ENCODE measurements at regions of chr15 and their contacts with region 1.

Region 1: DNA sequence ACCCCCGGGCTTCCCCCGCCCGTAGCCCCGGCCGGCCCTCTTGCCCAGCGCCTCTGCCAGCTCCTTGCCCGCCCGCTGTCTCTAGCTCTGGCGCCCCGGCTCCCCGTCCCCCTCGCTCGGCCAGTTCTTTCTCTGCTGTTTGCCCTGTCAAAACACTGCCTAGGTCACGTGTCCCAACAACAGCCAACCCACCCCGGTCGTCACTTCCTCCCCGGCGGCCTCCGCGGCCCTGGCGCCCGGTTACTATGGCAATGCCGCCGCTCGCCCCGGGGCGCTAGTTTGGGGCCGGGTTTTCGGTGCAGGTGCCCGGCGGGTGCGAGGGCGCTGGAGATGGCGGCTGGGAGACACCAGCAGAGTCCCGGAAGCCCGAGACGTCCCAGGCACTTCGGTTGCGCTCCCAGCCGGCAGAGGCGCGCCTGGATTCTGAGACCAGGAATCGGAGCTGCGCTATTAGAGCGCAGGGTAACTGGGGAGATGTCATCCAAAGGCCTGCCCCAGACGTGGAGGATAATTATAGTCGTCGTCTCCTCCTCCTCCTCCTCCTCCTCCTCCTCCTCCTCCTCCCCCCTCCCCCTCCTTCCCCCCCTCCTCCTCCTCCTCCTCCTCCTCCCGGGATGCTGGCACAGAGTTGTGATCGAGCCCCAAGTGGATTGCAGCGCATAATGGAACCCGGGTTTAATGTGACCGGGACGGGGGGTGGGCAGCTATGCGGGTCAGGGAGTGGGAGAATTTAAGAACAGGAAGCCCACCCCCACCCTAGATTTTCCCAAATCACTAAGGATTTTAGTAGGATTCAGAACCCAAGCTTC is at the start of gene ATOSA:
- H3K4me3 ChIP-seq: peak within 1 kb of the TSS; percentile 63
- H3K27ac ChIP-seq: peak within 1 kb of the TSS; percentile 92
- H3K4me1 ChIP-seq: 0 out of 2 replicates have a peak, but pooled peaks cover 3% of the 10 kb centered on the region
- CTCF ChIP-seq: peak; percentile 10; the same call in 1 of the 2 replicates

Region 2: GRCh38 chr15:52719684-52720083 is 40.2 kb after region 1 on chr15:
- CTCF ChIA-PET with region 1: no interaction called
- POLR2A ChIA-PET with region 1: interaction called, 11 read pairs
- H3K4me3 ChIP-seq: no peak overlapping the region
- H3K27ac ChIP-seq: no peak overlapping the region
- H3K4me1 ChIP-seq: no peaks in the 10 kb centered on the region
- CTCF ChIP-seq: no peak

Region 3: GRCh38 chr15:52749258-52749657 is 69.8 kb after region 1 on chr15:
- CTCF ChIA-PET with region 1: no interaction called
- POLR2A ChIA-PET with region 1: no interaction called
- H3K4me3 ChIP-seq: no peak overlapping the region
- H3K27ac ChIP-seq: no peak overlapping the region
- H3K4me1 ChIP-seq: no peaks in the 10 kb centered on the region
- CTCF ChIP-seq: no peak